GM13976 (cell line): ENCODE measurements at regions of chr13 and their contacts with region 1.

Region 1: DNA sequence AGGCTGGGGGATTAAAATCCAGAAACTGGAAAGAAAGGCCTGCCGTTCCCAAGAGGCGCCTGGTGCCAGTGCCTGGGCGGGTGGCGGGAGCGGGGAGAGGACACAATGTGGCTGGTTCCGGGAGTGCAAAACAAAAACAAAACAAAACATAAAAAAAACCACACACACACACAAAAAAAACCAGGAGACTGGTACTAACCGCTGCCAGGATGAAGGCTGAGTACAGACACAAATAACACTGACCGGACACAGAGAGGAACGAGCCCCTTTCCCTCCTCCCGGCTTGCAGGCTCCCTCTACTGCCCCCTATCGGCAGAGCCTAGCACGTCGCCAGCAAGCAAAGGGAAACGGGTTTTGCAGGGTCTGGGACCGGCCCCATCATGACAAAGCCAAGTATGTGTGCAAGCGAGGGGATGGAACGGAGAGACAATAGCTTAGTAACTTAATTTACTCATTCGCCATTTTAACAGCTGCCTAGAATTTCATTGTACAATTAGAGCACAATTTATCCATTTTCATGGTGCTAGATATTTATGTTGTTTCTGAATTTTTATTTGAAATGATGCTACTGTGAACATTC is 17.9 kb upstream of the ZDHHC20 start:
- DNase-seq: peak; percentile 82
- CTCF ChIP-seq: peak; percentile 97

Region 2: DNA sequence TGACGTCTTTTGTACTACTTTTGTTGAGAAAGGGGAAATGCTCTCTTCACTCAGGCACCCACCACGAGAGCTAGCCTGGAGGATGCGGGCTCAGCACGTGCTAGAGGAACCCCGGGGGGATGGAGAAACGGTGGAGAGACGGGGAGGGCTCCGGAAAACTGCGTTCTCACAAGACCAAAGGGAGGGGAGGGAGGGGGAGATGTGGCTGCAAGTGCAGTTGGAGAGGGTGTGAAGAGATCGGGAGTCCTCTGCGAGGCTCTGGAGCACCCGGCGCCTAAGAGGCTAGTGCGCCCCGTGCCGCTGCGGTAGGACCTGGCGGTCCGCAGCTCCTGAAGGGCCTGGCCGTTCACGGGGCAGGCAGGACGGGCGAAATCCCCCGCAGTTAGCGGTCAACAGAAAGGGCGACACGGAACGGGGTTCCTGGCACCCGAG is 531.0 kb before region 1 on chr13:
- in situ Hi-C with region 1: loop called (anchors 10 kb)
- DNase-seq: no peak
- CTCF ChIP-seq: no peak

Region 3: GRCh38 chr13:21022056-21022979 is 454.7 kb before region 1 on chr13:
- in situ Hi-C with region 1: no loop called
- DNase-seq: no peak
- CTCF ChIP-seq: no peak

Region 4: DNA sequence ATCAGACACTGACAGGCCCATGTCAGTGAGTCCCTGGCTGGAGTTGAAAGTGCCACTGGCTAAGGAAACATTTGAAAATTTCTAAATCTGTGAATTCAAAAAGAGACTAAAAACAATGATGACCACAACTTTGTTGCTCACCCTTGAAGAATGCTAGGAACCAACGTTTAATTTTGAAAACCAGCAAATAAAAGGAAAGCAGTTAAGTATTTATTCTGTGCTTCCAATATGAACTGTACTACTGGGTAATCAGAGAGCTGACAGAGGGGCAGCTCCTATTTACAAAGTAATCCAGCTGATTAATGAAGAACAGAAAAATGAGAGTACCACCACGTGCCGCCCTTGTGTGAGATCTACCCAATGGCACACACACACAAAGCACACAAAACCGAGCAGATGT is 370.9 kb before region 1 on chr13:
- in situ Hi-C with region 1: loop called (anchors 10 kb)
- DNase-seq: no peak
- CTCF ChIP-seq: no peak

Region 5: DNA sequence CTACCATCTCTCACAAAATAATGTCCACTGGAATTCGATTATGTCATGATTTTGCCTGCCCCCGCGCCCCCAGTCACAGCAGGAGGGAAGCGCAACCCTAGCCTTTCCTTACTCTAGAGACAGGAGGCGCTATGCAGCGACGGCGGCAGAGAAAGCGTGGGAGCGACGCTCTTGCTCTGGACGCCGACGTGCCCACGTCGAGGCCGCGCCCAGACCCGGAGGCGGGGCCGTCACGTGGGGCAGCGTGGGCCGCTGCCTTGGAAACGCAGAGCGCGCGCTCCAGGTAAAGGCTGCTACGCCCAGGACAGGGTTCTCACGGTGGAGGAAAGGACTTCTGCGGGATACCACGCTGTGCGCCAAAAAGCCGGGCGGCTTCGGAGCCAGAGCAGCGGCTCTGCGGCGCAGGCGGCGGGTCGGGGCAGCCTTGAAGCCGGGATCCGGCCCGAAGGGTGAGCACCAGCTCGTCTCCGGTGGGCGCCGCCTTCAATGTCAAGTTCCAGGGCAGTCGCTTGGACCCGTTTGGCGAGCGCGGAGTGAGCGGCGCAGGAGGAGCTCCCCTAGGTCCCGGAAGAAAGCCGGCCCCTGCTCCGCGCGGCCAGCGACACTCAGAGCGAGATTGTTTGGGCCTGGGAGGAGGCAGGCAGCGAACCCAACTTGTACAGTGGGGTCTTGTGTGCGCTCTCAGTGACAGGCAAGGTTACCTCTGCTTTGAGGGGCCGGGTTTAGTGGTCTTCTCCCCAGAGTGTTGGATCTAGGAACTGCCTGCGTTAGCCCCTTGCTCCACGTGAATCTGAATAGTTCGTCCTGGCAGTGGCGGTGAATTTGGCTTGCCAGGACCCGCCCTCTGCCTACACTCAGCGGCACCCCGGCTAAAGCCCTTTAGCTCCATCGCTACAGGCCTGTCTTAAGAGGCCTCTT is 178.8 kb before region 1 on chr13:
- in situ Hi-C with region 1: loop called (anchors 10 kb)
- DNase-seq: peak; percentile 95
- CTCF ChIP-seq: peak; percentile 94

Region 6: DNA sequence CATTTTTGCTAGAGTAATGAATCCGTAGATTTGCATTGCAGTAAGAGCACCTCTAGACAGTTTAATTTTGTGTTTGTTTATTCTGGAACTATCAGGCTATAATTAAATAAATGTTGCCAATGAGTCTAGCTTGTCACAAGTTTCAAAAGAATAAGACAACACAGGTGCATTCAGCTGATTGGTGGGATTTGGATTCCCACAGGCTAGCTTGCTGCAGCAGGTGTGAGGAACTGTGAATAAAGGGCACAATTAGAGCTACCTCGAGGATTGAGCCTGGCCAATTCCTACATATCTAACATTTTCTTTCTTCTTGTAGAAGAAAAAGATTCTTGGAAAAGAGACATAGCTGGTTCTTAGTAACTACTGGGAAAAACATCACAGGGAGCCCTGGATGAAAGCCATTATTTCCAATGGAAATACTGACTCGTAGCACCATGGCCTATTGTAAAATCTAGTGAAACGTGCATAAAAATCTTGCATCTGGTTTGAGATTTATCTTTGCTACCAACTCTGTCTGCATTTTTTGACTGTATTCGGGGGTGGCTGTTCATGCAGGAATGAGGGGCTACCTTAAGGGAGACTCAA is 554.8 kb after region 1 on chr13:
- in situ Hi-C with region 1: no loop called
- DNase-seq: no peak
- CTCF ChIP-seq: no peak